Ovary (tissue), 10 donors: ENCODE measurements at regions of chr12 and their contacts with region 1.

Region 1: DNA sequence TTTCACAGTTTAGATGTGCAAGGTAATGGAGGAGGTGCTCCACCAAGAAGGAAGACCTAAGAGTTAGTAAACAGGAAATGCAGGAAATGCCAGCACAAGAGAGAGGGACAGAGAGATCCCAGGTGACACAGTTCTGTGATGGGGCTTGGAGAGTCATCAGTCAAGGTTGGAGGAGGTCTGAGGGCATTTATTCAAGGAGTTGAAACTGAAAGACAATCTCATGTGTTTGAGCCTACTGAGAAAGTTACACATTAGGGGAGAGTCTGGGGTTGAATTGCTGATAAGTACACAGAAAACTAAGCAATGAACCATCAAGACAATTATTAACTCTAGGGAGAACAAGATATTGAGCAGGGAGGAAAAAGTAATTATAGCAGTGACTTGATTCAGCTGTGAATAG is 138.5 kb downstream of the ANO6 start:
- DNase-seq: no peak
- H3K4me3 ChIP-seq: no peak overlapping the region
- H3K27ac ChIP-seq: peak overlapping the region in 1 of 2 donors; percentile 55
- H3K4me1 ChIP-seq: peaks cover 32% of the 10 kb centered on the region
- H3K27me3 ChIP-seq: no peaks in the 10 kb centered on the region
- CTCF ChIP-seq: no peak
- EP300 ChIP-seq: no peak
- POLR2A ChIP-seq: no peak

Region 2: GRCh38 chr12:45309836-45310626 is 44.4 kb before region 1 on chr12:
- intact Hi-C with region 1: loop called in 2 of 4 experiments (anchors 10 kb)
- DNase-seq: no peak
- H3K4me3 ChIP-seq: no peak overlapping the region
- H3K27ac ChIP-seq: peak overlapping the region; percentile 7 to 35
- H3K4me1 ChIP-seq: peaks cover 10% of the 10 kb centered on the region
- H3K27me3 ChIP-seq: no peaks in the 10 kb centered on the region
- CTCF ChIP-seq: peak in 1 of 3 donors; percentile 14
- EP300 ChIP-seq: no peak
- POLR2A ChIP-seq: no peak

Region 3: GRCh38 chr12:45398552-45398951 is 44.2 kb after region 1 on chr12:
- intact Hi-C with region 1: no loop called
- DNase-seq: no peak
- H3K4me3 ChIP-seq: no peak overlapping the region
- H3K27ac ChIP-seq: no peak overlapping the region
- H3K4me1 ChIP-seq: peaks cover 3% of the 10 kb centered on the region
- H3K27me3 ChIP-seq: no peaks in the 10 kb centered on the region
- CTCF ChIP-seq: no peak
- EP300 ChIP-seq: no peak
- POLR2A ChIP-seq: no peak